Heart left ventricle (tissue), 16 donors: ENCODE measurements at regions of chr16 and their contacts with region 1.

Region 1: DNA sequence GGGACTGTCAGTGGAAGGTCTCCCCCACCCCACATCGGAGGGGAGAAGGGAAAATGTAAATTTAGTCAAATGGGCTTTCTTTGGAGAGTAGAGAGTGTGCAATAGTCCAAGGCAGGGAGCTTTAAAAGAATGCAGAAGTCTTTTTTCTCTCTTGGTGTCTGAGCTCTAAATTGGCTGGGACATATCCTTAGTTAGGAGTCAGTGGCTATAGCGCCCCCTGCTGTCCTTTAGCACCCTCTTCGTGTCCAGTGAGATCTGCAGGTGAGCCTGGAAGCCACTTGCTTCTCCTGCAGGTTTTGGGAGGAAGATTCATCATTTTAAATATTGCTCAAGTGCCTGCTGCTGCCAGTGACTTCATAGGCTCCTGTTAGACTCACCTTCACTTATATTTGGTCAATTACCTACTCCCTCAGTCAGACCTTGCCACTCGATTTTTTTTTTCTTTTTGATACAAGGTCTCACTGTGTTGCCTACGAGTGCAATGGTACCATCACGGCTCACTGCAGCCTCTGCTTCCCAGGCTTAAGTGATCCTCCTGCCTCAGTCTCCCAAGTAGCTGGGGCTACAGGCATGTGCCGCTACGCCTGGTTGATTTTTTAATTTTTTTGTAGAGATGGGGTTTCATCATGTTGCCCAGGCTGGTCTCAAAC is 174.8 kb downstream of the PRKCB start:
- DNase-seq: peak; percentile 45 to 82 (median 66)
- ATAC-seq: peak in 3 of 4 donors; percentile 55 to 78 (median 73)
- H3K4me3 ChIP-seq: no peak overlapping the region
- H3K27ac ChIP-seq: no peak overlapping the region
- H3K4me1 ChIP-seq: peaks cover 0 to 35% (median 0%) of the 10 kb centered on the region in 12 donors
- H3K27me3 ChIP-seq: peaks cover 0 to 21% (median 0%) of the 10 kb centered on the region in 9 donors
- CTCF ChIP-seq: peak; percentile 40 to 82 (median 64)
- POLR2A ChIP-seq: no peak

Region 2: DNA sequence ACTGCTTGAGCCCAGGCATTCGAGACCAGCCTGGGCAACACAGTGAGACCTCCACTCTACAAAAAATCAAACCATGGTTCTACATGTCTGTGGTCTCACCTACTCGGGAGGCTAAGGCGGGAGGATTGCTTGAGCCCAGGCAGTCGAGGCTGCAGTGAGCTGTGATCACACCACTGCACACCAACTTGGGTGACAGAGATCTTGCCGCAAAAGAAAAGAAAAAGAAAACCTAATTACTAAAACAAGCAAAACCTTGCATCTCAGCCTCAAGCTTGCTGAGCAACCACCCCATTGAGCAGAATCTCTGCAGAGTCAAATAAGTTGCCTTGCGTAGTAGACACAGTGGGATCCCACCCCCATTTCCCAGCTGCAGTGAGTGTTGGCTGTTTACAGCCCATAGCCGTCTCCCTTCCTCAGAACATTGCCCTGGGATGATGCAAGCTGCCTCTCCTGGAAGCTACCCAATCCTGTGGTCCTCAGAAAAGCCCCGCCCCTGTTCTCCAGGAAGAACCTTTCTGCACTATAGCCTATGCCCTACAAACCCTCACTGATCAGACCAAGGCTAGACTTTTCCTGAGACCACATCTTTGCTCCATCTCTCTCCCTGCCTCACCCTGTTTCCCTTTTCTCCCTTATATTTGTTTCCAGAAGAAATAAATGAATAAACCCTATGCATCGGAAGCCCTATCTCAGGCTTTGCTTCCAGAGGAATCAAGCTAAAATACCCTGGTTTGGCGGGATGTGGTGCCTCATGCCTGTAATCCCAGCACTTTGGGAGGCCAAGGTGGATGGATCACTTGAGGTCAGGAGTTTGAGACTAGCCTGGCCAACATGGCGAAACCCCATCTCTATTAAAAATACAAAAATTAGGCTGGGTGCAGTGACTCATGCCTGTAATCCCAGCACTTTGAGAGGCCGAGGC is 280.8 kb before region 1 on chr16:
- intact Hi-C with region 1: loop called in 2 of 10 experiments (anchors 10 kb)
- DNase-seq: no peak
- ATAC-seq: no peak
- H3K4me3 ChIP-seq: no peak overlapping the region
- H3K27ac ChIP-seq: no peak overlapping the region
- H3K4me1 ChIP-seq: peaks cover 0 to 4% (median 0%) of the 10 kb centered on the region in 12 donors
- H3K27me3 ChIP-seq: peaks cover 0 to 7% (median 0%) of the 10 kb centered on the region in 9 donors
- CTCF ChIP-seq: no peak
- POLR2A ChIP-seq: no peak

Region 3: DNA sequence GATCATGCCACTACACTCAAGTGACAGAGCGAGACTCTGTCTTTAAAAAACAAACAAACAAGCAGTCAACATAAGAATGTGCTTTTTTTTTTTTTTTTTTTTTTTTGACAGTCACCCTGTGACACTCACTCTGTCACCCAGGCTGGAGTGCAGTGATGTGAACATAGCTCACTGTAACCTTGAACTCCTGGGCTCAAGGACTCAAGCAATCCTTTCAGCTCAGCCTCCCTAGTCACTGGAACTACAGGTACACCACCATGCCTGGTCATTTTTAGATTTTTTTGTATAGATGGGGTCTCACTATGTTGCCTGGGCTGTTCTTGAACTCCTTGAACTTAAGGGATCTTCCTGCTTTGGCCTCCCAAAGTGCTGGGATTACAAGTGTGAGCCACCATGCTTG is 271.0 kb before region 1 on chr16:
- intact Hi-C with region 1: loop called in 5 of 10 experiments (anchors 5 to 10 kb)
- DNase-seq: no peak
- ATAC-seq: no peak
- H3K4me3 ChIP-seq: no peak overlapping the region
- H3K27ac ChIP-seq: no peak overlapping the region
- H3K4me1 ChIP-seq: no peaks in the 10 kb centered on the region
- H3K27me3 ChIP-seq: peaks cover 0 to 31% (median 0%) of the 10 kb centered on the region in 9 donors
- CTCF ChIP-seq: no peak
- POLR2A ChIP-seq: no peak

Region 4: DNA sequence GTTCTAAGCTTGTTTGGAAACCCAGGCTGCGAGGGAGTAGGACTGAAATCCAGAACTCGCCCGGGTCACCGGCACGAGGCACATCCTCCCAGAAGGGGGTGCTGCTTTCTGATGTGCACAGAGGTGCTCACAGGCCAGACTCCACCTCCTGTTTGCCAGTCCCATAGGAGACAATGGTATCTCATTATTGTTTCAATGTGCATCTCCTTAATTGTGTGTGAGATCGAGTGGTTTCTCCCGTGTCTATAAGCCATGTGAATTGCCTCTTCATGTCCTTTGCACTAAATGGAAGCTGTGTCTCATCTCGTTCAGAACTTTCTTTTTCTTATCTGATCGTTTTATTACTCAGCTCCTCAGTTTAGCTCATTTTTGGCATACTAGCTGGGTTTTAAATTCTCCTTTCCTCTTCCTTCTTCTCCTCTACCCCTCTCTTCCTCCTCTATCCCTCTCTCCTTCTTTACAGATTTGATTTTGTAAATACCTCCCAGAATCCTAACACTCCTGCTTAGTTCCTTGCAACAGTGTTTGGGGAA is 206.9 kb before region 1 on chr16:
- intact Hi-C with region 1: loop called (anchors 1 to 10 kb)
- DNase-seq: peak; percentile 23 to 74 (median 40)
- ATAC-seq: peak in 2 of 4 donors; percentile 39 to 67
- H3K4me3 ChIP-seq: no peak overlapping the region
- H3K27ac ChIP-seq: no peak overlapping the region
- H3K4me1 ChIP-seq: peaks cover 0 to 7% (median 0%) of the 10 kb centered on the region in 12 donors
- H3K27me3 ChIP-seq: peaks cover 0 to 38% (median 0%) of the 10 kb centered on the region in 9 donors
- CTCF ChIP-seq: peak in 11 of 12 donors; percentile 11 to 44 (median 37)
- POLR2A ChIP-seq: no peak